HepG2 (cell line): ENCODE measurements at regions of chr1 and their contacts with region 1.

Region 1: DNA sequence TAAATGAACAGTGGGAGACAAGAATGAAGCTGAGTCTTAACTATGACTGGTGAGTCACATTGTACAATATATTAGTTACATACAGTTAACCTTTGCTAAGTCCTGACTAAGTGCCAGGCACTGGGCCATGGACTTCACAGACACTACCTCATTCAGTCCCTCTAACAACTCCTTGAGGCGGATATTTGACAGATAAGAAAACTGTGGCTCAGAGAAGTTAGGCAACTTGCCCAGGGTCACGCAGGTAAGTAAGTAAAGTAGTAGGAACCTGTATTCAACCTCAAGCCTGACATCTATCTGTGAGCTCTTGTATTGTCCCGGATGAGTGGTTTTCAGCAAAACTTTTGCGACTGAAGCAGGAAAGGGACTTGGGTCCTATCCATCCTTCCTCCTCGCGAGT is 62.1 kb downstream of the GNG12 start:
- DNase-seq: no peak
- ATAC-seq: peak; percentile 80
- H3K4me3 ChIP-seq: no peak overlapping the region
- H3K27ac ChIP-seq: no peak overlapping the region
- H3K4me1 ChIP-seq: no peaks in the 10 kb centered on the region
- H3K27me3 ChIP-seq: peaks cover 0 to 6% of the 10 kb centered on the region in 2 experiments; a peak in 1 of 5 replicates
- CTCF ChIP-seq: peak; percentile 48
- EP300 ChIP-seq: no peak
- POLR2A ChIP-seq: no peak
- RAD21 ChIP-seq: no peak

Region 2: DNA sequence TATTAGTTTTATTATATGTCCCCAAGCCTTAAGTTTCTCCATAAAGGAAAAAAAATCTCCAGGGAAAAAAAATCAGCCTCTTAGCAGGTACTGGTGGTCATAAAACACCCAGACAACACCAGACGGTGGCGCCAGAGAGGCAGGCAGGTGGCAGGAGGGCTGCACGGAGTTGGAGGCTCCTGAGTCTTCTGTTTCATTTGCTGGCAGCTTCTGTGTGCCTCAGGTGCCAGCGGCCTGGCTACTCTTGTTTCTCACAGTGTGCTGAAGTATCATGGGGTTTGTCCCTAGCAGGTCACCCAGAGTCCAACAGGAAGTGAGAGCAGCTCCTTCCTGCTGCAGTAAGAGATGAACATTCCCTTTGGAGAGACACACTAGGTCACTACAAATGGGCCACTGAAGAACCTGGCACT is 209.4 kb before region 1 on chr1:
- CTCF ChIA-PET with region 1: interaction called, 8 read pairs
- POLR2A ChIA-PET with region 1: no interaction called
- in situ Hi-C with region 1: no loop called
- intact Hi-C with region 1: loop called (anchors 2 kb)
- DNase-seq: peak; percentile 74
- ATAC-seq: peak; percentile 90
- H3K4me3 ChIP-seq: no peak overlapping the region
- H3K27ac ChIP-seq: no peak overlapping the region
- H3K4me1 ChIP-seq: peaks cover 52% of the 10 kb centered on the region
- H3K27me3 ChIP-seq: 0 out of 5 replicates have a peak, but pooled peaks cover 0 to 6% of the 10 kb centered on the region in 2 experiments
- CTCF ChIP-seq: peak; percentile 88
- EP300 ChIP-seq: no peak
- POLR2A ChIP-seq: no peak
- RAD21 ChIP-seq: peak; percentile 91